Activated naive CD4-positive, alpha-beta T cell treated with anti-CD3 and anti-CD28 coated beads for 36 hours (primary cell): ENCODE measurements at regions of chrX and their contacts with region 1.

Region 1: GRCh38 chrX:4706961-4707360 is 993.5 kb upstream of the PRKX start:
- DNase-seq: no peak
- H3K4me3 Mint-ChIP-seq: no peak overlapping the region
- H3K27ac Mint-ChIP-seq: no peak overlapping the region
- H3K4me1 Mint-ChIP-seq: no peaks in the 10 kb centered on the region
- H3K27me3 Mint-ChIP-seq: no peaks in the 10 kb centered on the region

Region 2: GRCh38 chrX:4690521-4690920 is 16.4 kb before region 1 on chrX:
- CTCF ChIA-PET with region 1: no interaction called
- intact Hi-C with region 1: loop called (anchors 1 kb)
- DNase-seq: no peak
- H3K4me3 Mint-ChIP-seq: no peak overlapping the region
- H3K27ac Mint-ChIP-seq: no peak overlapping the region
- H3K4me1 Mint-ChIP-seq: no peaks in the 10 kb centered on the region
- H3K27me3 Mint-ChIP-seq: no peaks in the 10 kb centered on the region